Caco-2 (cell line): ENCODE measurements at regions of chr19 and their contacts with region 1.

Region 1: GRCh38 chr19:17996826-17997316 is 11.1 kb upstream of the ARRDC2 start:
- DNase-seq: peak; percentile 78 to 91
- H3K4me3 ChIP-seq: no peak overlapping the region
- H3K4me3 Mint-ChIP-seq: no peak overlapping the region
- H3K27ac Mint-ChIP-seq: no peak overlapping the region
- H3K4me1 ChIP-seq: peaks cover 1% of the 10 kb centered on the region; the same call in 1 of the 2 replicates
- H3K4me1 Mint-ChIP-seq: peaks cover 7% of the 10 kb centered on the region
- H3K27me3 ChIP-seq: no peaks in the 10 kb centered on the region
- H3K27me3 Mint-ChIP-seq: no peaks in the 10 kb centered on the region
- CTCF ChIP-seq: peak; percentile 92 to 95

Region 2: GRCh38 chr19:17865364-17866311 is 131.2 kb before region 1 on chr19:
- CTCF ChIA-PET with region 1: interaction called, 8 read pairs
- POLR2A ChIA-PET with region 1: no interaction called
- intact Hi-C with region 1: loop called (anchors 5 kb)
- DNase-seq: peak; percentile 51 to 78
- H3K4me3 ChIP-seq: no peak overlapping the region
- H3K4me3 Mint-ChIP-seq: peak overlapping the region; percentile 13
- H3K27ac Mint-ChIP-seq: peak overlapping the region; percentile 71
- H3K4me1 ChIP-seq: peaks cover 18% of the 10 kb centered on the region
- H3K4me1 Mint-ChIP-seq: peaks cover 14% of the 10 kb centered on the region
- H3K27me3 ChIP-seq: no peaks in the 10 kb centered on the region
- H3K27me3 Mint-ChIP-seq: no peaks in the 10 kb centered on the region
- CTCF ChIP-seq: no peak

Region 3: GRCh38 chr19:17938092-17938845 is 58.6 kb before region 1 on chr19:
- CTCF ChIA-PET with region 1: interaction called, 21 read pairs
- POLR2A ChIA-PET with region 1: no interaction called
- intact Hi-C with region 1: loop called (anchors 1 kb)
- DNase-seq: peak; percentile 70 to 79
- H3K4me3 ChIP-seq: no peak overlapping the region
- H3K4me3 Mint-ChIP-seq: no peak overlapping the region
- H3K27ac Mint-ChIP-seq: no peak overlapping the region
- H3K4me1 ChIP-seq: no peaks in the 10 kb centered on the region
- H3K4me1 Mint-ChIP-seq: peaks cover 5% of the 10 kb centered on the region
- H3K27me3 ChIP-seq: no peaks in the 10 kb centered on the region
- H3K27me3 Mint-ChIP-seq: no peaks in the 10 kb centered on the region
- CTCF ChIP-seq: peak; percentile 86 to 94

Region 4: DNA sequence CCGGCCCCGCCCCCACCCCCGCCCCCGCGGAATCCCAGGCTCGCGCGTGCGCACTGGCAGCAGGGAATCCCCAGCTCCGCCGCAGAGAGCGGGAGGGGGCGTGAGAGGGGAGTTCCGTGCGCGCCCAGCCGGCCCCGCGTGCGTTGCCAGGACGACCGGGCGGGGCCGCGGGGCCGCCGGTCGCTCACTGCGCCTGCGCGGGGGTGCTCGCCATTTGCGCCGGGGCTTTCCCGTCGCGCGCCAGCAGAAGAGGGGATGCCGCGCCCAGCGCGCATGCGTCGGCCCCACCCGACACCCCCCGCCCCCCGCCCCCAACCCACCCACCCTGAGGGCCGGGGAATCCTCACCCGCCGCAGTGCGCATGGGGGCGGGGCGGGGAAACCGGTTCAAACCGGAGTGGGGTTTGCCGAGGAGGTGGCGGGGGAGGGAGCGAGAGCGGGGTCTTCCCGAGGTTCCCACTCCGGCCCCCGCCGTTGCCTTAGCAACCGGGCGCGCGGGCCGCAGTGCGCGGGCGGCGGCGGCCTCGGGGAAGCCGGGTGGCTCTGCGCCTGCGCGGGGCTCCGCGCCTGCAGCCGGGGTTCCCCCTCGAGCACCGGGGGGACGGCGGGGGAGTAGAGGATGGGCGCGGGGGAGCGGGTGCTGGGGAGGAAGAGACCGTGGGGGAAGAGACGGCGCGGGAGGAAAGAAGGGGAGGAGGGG is 48.9 kb before region 1 on chr19:
- CTCF ChIA-PET with region 1: interaction called, 14 read pairs
- POLR2A ChIA-PET with region 1: no interaction called
- intact Hi-C with region 1: loop called (anchors 2 kb)
- DNase-seq: peak; percentile 92 to 96
- H3K4me3 ChIP-seq: peak overlapping the region; percentile 52
- H3K4me3 Mint-ChIP-seq: peak overlapping the region; percentile 87
- H3K27ac Mint-ChIP-seq: peak overlapping the region; percentile 87
- H3K4me1 ChIP-seq: peaks cover 17% of the 10 kb centered on the region
- H3K4me1 Mint-ChIP-seq: peaks cover 12% of the 10 kb centered on the region
- H3K27me3 ChIP-seq: peaks cover 3% of the 10 kb centered on the region
- H3K27me3 Mint-ChIP-seq: peaks cover 2% of the 10 kb centered on the region
- CTCF ChIP-seq: no peak

Region 5: GRCh38 chr19:18074190-18074589 is 77.3 kb after region 1 on chr19:
- CTCF ChIA-PET with region 1: interaction called, 11 read pairs
- POLR2A ChIA-PET with region 1: no interaction called
- intact Hi-C with region 1: no loop called
- DNase-seq: peak in 1 of 2 experiments; percentile 34
- H3K4me3 ChIP-seq: no peak overlapping the region
- H3K4me3 Mint-ChIP-seq: no peak overlapping the region
- H3K27ac Mint-ChIP-seq: no peak overlapping the region
- H3K4me1 ChIP-seq: no peaks in the 10 kb centered on the region
- H3K4me1 Mint-ChIP-seq: no peaks in the 10 kb centered on the region
- H3K27me3 ChIP-seq: no peaks in the 10 kb centered on the region
- H3K27me3 Mint-ChIP-seq: no peaks in the 10 kb centered on the region
- CTCF ChIP-seq: peak; percentile 27 to 45